Posterior cingulate gyrus (tissue), 11 donors: ENCODE measurements at regions of chr13 and their contacts with region 1.

Region 1: DNA sequence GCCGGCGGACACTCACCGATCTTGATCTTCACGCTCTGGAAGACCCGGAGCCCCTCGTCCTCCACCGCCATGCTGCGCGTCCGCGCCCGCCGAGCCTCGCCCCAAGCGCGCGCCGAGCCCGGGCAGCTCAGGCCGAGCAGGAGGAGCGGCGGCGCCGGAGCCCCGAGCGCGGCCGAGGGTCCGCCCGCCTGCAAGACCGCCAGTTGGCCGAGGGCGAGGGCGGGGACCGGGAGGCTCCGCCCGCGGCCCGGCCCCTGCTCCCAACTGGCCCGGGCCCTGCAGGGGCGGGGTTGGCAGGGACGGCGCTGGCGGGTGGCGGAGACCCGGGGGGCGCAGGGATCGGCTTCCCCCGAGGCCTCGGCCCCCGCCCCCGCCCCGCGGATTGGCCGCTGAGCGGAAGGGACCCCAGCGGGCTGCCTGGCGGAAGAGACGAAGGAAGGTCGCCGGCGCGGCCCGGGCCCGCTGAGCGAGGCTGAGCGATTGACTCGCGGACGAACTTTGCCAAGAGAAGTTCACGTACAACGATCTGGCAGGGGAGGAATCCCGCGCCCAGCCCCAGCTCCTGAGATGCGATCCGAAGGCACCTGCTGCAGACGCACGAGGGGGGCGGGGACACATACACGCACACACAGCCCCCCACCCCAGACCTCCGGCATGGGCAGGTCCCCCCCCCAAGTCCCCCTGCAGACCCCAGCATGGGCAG is at the start of gene RASA3:
- DNase-seq: peak; percentile 43 to 96 (median 66)

Region 2: DNA sequence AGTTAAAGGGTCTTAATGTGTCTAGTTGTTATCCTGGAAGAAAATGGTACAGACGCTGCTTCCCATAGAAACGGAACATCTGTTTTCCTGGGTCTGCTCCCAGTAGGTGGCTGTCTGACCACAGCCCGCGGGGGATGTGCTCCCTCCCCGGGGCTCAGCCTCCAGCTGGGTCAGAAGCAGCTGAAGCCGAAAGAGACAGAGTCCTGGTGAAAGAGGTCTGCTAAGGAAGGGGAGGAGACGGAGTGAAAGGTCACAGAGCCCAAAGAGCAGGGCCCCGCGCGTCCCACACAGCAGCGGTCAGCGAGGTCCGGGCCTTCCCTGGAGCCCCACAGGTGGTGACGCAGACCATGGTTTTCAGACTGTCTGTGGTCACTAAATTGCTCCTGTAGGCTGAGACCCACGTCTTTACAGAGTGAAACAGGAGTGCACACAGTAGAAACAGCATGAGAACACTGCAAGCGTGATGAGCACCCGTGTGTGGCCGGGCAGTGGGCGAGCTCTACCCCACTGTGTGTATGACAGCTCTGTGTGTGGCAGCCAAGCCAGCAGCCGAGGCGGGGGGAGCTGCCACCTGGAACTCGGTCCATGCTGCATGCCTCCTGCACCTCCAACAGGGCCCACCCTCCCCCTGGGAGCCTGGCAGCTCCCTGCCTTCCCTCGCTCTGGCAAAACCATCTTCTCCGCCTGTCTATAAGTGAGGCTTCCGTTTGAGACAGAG is 106.7 kb before region 1 on chr13:
- intact Hi-C with region 1: loop called (anchors 5 kb)
- DNase-seq: peak in 6 of 10 donors; percentile 64 to 94 (median 82)

Region 3: DNA sequence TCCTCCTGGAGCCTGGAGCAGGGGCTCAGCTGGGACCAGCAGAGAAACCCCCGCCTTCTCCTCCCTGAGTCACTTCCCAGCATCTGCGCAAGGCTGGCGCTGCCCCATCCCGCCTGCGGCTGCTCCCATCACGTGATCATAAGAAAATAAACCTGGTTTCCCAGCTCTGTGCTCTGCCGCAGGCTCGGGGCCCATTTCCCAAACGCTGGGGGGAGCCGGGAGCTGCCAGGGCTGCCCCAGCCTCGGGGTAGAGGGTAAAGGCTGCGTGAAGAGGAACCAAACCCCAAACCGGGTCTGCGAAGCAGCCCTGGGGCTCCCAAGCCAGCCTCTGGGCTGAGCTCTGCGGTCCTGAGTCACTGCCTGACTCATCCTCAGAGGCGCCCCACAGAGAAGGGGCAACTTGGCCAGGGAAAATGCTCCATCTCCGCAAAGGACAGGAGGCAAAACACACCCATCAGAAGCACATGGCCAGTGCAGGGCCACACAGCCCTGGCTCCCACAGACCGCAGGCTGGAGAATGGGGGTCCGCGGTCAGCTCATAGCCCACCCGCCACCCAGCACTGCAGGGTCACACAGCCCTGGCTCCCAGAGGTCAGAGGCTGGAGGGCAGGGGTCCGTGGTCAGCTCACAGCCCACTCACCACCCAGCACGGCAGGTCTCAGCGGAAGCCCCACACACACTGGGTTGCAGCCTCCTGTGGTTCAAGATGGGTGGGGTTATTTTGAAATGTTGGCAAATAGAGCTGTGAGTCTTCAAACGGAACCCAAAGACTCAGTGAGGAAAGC is 67.2 kb before region 1 on chr13:
- intact Hi-C with region 1: loop called (anchors 10 kb)
- DNase-seq: peak; percentile 63 to 96 (median 78)